ENCODE measurements at regions of chr3 and their contacts with region 1.

Region 1: GRCh38 chr3:113495035-113495434 is 19.9 kb downstream of the SPICE1 start:
- DNase-seq: no peak
- ATAC-seq: no peak

Region 2: DNA sequence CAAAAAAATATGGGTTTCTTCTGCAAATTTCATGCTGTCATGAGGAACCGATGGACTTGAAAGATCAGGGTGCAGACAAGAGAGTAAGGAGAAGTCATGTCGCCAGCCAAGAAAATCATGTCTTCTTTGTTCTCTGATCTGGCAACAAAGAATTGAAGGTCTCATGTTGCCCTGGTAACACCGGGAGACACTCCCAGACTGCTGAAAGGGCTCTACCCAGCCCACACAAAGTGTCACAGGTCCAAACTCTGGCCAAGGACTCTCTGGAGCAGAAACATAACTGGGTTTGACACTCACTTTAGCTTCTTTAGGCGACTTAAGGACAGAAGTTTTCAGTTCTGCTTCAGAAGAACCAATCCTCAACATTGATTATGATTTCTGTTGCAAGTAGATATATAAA is 80.2 kb after region 1 on chr3:
- intact Hi-C with region 1: no loop called
- DNase-seq: no peak
- ATAC-seq: no peak

Region 3: GRCh38 chr3:113626503-113627371 is 131.7 kb after region 1 on chr3:
- intact Hi-C with region 1: loop called (anchors 5 kb)
- DNase-seq: peak; percentile 65
- ATAC-seq: peak; percentile 96

Region 4: DNA sequence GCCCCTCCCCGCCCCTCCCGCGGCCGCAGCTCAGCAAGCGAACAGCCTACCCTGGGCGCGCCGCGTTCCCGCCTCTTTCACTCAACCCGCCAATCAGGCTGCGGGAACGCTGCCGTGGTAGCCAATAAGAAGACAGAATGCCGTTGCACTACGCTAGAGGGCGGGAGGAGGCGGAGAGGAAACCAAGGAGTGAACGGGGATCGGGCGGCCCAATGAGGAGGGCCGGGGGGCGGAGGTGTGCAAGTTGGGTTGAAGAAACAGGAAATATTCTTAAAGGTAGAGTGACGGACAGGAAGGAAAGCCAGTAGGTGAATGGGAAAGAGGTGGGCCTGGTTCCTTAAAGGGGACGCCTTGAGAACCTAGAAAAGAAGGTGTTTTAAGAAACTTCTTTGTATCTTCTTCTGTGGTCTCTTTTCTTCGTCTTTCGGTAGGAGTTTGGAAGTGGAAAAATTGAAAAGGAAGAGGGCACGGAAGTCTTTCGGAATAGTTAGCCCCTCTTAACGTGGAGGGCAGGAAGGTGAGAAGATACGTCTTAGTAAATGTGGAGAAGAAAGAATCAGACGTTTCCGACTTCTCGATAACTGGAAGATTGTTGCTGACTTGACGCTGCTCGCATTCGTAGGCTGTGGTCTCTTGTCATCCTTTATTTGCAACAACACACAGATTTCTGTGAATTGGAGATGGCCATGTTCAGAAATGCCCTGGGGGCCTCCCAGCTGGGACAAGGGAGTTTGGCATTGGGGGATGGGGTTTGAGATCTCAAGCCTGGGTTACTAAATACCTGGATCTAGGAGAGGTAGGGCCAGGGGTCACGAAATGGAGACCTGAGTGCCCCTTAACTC is 201.8 kb after region 1 on chr3:
- intact Hi-C with region 1: no loop called
- DNase-seq: peak; percentile 99
- ATAC-seq: peak; percentile 96

Measured in left ventricle myocardium superior (tissue), 1 donor.